Spleen (tissue), 13 donors: ENCODE measurements at regions of chr16 and their contacts with region 1.

Region 1: DNA sequence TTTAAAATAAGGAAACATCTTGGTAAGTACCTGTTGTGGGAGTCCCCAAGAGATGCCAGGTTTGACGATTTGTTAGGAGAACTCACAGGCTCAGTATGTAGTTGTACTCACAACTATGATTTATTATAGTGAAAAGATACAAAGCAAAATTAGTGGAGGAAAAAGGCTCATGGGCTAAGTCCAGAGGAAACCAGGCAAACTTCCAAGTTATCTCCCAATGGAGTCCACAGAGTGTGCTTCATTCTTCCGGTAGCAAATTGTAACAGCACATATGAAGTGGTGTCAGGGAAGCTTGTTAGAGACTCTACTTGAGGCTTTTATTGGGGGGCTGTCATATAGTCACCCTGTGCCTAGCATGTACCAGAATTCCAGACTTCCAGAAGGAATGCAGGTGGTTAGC is 2.3 kb downstream of the DDX19A start:
- DNase-seq: no peak
- H3K4me3 ChIP-seq: no peak overlapping the region
- H3K27ac ChIP-seq: no peak overlapping the region
- H3K4me1 ChIP-seq: peaks cover 14 to 52% (median 30%) of the 10 kb centered on the region in 6 donors
- H3K27me3 ChIP-seq: no peaks in the 10 kb centered on the region
- CTCF ChIP-seq: no peak
- POLR2A ChIP-seq: no peak

Region 2: DNA sequence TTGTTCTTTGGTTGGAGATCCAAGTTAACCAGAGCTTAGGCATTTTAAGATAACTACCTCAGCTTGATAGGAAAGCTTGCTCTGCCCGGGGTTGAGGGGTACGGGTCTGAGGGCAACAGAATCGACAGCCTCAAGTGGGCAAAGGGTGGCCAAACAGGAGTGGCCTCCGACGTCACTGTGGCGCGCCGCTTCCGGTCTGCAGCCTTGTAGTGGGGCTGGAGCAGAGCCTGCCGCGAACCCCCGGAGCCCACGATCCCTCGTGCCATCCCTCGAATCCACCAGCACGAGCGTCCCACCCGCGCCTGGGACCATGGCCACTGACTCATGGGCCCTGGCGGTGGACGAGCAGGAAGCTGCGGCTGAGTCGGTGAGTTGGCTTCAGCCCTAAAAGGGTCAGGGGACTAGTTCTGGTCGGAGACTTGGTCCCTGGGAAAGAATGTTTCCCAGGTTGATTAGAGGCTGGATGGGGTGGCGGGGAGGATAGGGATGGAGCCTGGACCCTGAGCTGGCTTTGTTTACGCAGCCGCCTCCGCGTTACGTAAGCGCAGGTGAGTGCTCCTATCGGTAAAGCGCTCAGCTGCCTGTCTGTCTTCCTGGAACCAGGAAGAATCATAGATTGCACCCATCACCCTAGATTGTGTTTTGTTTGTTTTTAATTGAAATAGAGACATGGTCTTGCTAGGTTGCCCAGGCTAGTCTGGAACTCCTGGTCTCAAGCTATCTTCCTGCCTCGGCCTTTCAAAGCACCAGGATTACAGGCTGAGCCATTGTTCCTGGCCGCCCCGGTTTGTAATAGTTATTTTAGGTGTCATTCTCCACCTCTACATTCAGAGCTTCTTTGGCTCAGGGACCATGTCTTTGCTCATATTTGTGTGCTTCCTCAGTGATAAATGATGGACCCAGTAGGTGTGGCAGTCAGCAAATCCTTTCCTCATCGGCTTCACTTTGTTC is 49.7 kb before region 1 on chr16 and contains the start of gene DDX19B:
- intact Hi-C with region 1: loop called (anchors 5 kb)
- DNase-seq: peak; percentile 95
- H3K4me3 ChIP-seq: peak within 1 kb of the TSS; percentile 63 to 87 (median 74)
- H3K27ac ChIP-seq: peak within 1 kb of the TSS; percentile 91 to 97 (median 95)
- H3K4me1 ChIP-seq: peaks cover 3 to 53% (median 23%) of the 10 kb centered on the region in 6 donors
- H3K27me3 ChIP-seq: no peaks in the 10 kb centered on the region
- CTCF ChIP-seq: peak in 1 of 11 experiments; percentile 14
- POLR2A ChIP-seq: peak in 1 of 3 donors; percentile 55
- total RNA-seq, gene DDX19B: 22.3 to 35.3 (median 28.6) TPM